PC-3 (cell line): ENCODE measurements at regions of chr9 and their contacts with region 1.

Region 1: GRCh38 chr9:109520478-109521132 is 22.5 kb upstream of the PTPN3 start:
- DNase-seq: peak; percentile 87
- ATAC-seq: peak; percentile 96
- H3K4me3 ChIP-seq: no peak overlapping the region
- H3K27ac ChIP-seq: no peak overlapping the region
- H3K4me1 ChIP-seq: no peaks in the 10 kb centered on the region
- H3K27me3 ChIP-seq: no peaks in the 10 kb centered on the region
- CTCF ChIP-seq: peak; percentile 83

Region 2: GRCh38 chr9:109440797-109441287 is 79.8 kb before region 1 on chr9:
- CTCF ChIA-PET with region 1: no interaction called
- POLR2A ChIA-PET with region 1: no interaction called
- intact Hi-C with region 1: loop called (anchors 1 kb)
- DNase-seq: peak; percentile 80
- ATAC-seq: peak; percentile 84
- H3K4me3 ChIP-seq: no peak overlapping the region
- H3K27ac ChIP-seq: 0 out of 2 replicates have a peak overlapping the region, but pooled peaks have one; percentile 10
- H3K4me1 ChIP-seq: no peaks in the 10 kb centered on the region; the same call in 1 of the 2 replicates
- H3K27me3 ChIP-seq: no peaks in the 10 kb centered on the region
- CTCF ChIP-seq: peak; percentile 76

Region 3: DNA sequence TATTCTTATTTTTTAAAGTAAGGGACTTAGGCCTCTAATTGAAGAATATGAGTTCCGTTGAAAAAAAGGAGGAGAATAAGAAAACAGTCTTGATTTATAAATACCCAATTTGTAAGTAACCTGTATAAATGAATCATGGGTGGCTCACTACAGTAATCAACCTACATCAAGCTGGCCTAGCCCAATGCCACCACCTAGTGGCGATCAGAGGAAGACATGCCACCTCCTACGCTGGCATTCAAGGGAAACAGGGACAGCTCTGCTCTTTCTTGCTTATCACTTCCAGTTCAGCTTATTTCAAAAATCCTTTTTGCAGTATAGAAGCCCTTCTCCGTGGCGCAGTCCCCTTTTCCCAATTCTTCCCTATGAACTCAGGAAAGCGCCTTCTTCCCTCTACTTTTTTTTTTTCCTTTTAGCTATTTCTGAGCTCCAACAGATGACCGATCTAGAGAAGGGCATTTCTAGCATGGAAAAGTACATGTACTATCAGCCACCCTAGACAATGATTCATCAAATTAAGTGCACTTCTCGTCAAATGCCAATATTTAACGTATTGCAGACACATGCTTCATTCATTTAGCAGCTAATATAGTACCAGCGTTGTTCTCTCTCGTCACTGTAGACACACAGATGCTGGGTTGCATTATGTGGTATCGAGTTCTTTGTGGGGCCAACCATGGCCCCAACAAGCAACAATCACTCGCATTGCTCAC is 50.8 kb before region 1 on chr9:
- CTCF ChIA-PET with region 1: interaction called, 3 read pairs
- POLR2A ChIA-PET with region 1: no interaction called
- intact Hi-C with region 1: loop called (anchors 1 kb)
- DNase-seq: peak; percentile 80
- ATAC-seq: peak; percentile 95
- H3K4me3 ChIP-seq: no peak overlapping the region
- H3K27ac ChIP-seq: no peak overlapping the region
- H3K4me1 ChIP-seq: peaks cover 19% of the 10 kb centered on the region; the same call in 1 of the 2 replicates
- H3K27me3 ChIP-seq: no peaks in the 10 kb centered on the region
- CTCF ChIP-seq: peak; percentile 83

Region 4: DNA sequence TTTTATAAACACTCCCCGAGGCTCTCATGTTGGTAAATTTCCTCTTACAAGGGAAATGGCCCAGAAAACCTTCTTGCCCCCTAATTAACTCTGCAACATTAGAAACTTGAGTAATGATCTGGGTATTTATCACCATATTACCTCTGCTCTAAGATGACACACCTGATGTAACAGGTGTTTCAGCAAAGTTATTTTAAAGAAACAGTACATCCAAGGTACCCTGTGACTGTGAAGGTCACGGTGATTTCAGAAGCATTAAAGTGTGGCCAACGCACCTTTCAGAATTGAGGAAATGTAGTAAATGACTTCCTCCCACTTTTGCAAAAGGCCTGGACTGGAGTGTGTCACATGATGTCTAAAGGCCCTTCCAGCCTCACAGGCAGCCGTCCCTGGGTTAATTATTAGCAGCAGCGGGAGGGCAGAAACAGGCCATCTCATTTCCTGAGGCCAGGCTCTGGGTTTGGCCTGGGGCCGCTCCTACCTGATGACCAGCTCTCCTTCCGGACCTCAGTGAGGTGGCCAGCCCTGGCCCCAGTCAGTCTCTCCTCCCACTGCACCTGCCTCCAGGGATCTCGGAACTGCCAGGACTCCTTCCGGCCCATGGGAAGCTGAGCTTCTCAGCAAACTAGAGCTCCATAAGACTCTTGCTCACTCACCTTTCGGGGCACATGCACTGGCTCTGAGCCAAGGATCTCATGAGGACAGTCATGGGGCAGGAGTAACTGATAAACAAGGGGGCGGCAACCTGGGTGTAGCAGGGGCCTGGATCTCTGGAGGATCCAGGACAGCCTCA is 43.2 kb before region 1 on chr9:
- CTCF ChIA-PET with region 1: no interaction called
- POLR2A ChIA-PET with region 1: no interaction called
- intact Hi-C with region 1: loop called (anchors 2 kb)
- DNase-seq: peak; percentile 79
- ATAC-seq: peak; percentile 87
- H3K4me3 ChIP-seq: peak overlapping the region; percentile 17; the same call in 1 of the 2 replicates
- H3K27ac ChIP-seq: peak overlapping the region; percentile 89
- H3K4me1 ChIP-seq: peaks cover 53% of the 10 kb centered on the region
- H3K27me3 ChIP-seq: no peaks in the 10 kb centered on the region
- CTCF ChIP-seq: no peak